Esophagus muscularis mucosa (tissue), 4 donors: ENCODE measurements at regions of chr11 and their contacts with region 1.

Region 1: DNA sequence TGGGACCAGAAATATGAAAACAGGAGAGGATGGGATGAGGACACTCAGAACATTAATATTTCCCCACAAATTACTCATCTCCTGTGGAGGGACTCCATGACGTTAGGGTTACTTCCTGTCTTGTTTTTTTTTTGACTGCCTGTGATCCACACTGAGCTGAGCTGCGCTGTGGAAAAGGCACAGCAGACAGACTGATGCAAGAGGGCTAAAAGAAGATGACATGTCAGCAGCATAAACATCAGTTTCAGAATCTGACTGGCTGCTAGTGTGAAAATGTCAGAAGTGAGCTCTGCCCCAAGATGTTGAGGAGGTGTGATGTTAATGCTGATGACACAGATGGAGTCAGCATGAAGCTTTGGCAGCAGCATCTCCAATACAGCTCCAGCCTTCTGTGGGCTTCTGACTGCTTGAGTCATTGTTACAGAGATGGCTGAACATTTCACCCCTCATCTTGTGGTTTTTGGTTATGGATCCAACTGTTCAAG is 286.8 kb downstream of the BLID start:
- DNase-seq: no peak
- H3K4me3 ChIP-seq: no peak overlapping the region
- H3K27ac ChIP-seq: peak overlapping the region; percentile 62 to 79 (median 69)
- H3K4me1 ChIP-seq: peaks cover 0 to 21% (median 13%) of the 10 kb centered on the region in 4 donors
- H3K27me3 ChIP-seq: no peaks in the 10 kb centered on the region
- CTCF ChIP-seq: no peak
- EP300 ChIP-seq: no peak
- POLR2A ChIP-seq: no peak

Region 2: DNA sequence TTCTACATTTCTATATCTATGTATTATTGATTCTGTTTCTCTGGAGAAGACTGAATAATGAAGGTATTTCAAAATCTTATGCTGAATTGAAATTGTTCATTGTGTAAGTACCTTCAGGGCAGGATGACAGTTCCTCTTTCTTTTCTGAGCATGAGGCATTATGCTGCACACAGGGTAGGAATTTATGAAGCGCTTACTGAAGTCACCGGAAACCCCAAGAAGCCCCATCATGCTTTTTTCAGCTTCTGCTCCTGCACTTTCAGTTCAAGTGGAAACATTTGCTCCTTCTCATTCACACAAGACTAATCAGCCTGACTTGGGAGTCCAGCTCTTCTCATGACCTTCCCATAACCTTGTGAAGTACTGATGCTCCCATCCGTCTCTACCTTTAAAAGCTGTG is 61.8 kb before region 1 on chr11:
- intact Hi-C with region 1: loop called (anchors 10 kb)
- DNase-seq: no peak
- H3K4me3 ChIP-seq: no peak overlapping the region
- H3K27ac ChIP-seq: peak overlapping the region in 1 of 4 donors; percentile 28
- H3K4me1 ChIP-seq: peaks cover 4 to 28% (median 26%) of the 10 kb centered on the region in 4 donors
- H3K27me3 ChIP-seq: no peaks in the 10 kb centered on the region
- CTCF ChIP-seq: no peak
- EP300 ChIP-seq: no peak
- POLR2A ChIP-seq: no peak